ENCODE measurements at regions of chr14 and their contacts with region 1.

Region 1: DNA sequence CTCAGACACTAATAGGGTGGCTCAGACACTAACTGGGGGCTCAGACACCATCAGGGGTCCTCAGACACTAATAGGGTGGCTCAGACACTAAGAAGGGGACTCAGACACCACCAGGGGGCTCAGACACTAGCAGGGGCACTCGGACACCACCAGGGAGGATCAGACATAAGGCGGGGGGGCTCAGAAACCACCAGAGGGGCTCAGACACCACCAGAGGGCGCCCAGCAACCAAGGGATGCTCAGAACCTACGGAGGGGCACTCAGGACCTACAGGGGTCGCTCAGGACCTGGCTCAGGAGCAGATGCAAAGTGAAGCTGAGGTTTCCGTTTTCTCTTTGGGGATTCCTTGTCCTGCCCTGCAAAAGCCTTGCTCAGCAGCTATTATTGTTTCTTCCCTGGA is 448.5 kb downstream of the TMEM121 start:
- DNase-seq: peak; percentile 72
- H3K4me3 Mint-ChIP-seq: no peak overlapping the region
- H3K27ac Mint-ChIP-seq: no peak overlapping the region
- H3K4me1 Mint-ChIP-seq: peaks cover 1% of the 10 kb centered on the region
- H3K27me3 Mint-ChIP-seq: peaks cover 31% of the 10 kb centered on the region

Region 2: GRCh38 chr14:105989566-105990302 is 14.8 kb after region 1 on chr14:
- CTCF ChIA-PET with region 1: interaction called, 10 read pairs
- DNase-seq: peak; percentile 46
- H3K4me3 Mint-ChIP-seq: no peak overlapping the region
- H3K27ac Mint-ChIP-seq: no peak overlapping the region
- H3K4me1 Mint-ChIP-seq: peaks cover 65% of the 10 kb centered on the region
- H3K27me3 Mint-ChIP-seq: peaks cover 8% of the 10 kb centered on the region